ENCODE measurements at regions of chr3 and their contacts with region 1.

Region 1: GRCh38 chr3:153783106-153783505 is 338.1 kb upstream of the ARHGEF26 start:
- DNase-seq: no peak
- H3K4me3 ChIP-seq: no peak overlapping the region
- H3K27ac ChIP-seq: no peak overlapping the region
- H3K4me1 ChIP-seq: no peaks in the 10 kb centered on the region; a peak in 1 of 7 replicates
- H3K27me3 ChIP-seq: no peaks in the 10 kb centered on the region
- CTCF ChIP-seq: no peak
- EP300 ChIP-seq: no peak
- POLR2A ChIP-seq: no peak
- RAD21 ChIP-seq: no peak

Region 2: GRCh38 chr3:153768561-153769469 is 14.3 kb before region 1 on chr3:
- CTCF ChIA-PET with region 1: interaction called, 14 read pairs
- POLR2A ChIA-PET with region 1: no interaction called
- DNase-seq: peak; percentile 17 to 59
- H3K4me3 ChIP-seq: no peak overlapping the region
- H3K27ac ChIP-seq: no peak overlapping the region
- H3K4me1 ChIP-seq: no peaks in the 10 kb centered on the region
- H3K27me3 ChIP-seq: no peaks in the 10 kb centered on the region
- CTCF ChIP-seq: peak in 2 of 3 experiments; percentile 78 to 90; a peak in 3 of 4 replicates
- EP300 ChIP-seq: no peak
- POLR2A ChIP-seq: no peak
- RAD21 ChIP-seq: peak; percentile 93 to 96

Region 3: DNA sequence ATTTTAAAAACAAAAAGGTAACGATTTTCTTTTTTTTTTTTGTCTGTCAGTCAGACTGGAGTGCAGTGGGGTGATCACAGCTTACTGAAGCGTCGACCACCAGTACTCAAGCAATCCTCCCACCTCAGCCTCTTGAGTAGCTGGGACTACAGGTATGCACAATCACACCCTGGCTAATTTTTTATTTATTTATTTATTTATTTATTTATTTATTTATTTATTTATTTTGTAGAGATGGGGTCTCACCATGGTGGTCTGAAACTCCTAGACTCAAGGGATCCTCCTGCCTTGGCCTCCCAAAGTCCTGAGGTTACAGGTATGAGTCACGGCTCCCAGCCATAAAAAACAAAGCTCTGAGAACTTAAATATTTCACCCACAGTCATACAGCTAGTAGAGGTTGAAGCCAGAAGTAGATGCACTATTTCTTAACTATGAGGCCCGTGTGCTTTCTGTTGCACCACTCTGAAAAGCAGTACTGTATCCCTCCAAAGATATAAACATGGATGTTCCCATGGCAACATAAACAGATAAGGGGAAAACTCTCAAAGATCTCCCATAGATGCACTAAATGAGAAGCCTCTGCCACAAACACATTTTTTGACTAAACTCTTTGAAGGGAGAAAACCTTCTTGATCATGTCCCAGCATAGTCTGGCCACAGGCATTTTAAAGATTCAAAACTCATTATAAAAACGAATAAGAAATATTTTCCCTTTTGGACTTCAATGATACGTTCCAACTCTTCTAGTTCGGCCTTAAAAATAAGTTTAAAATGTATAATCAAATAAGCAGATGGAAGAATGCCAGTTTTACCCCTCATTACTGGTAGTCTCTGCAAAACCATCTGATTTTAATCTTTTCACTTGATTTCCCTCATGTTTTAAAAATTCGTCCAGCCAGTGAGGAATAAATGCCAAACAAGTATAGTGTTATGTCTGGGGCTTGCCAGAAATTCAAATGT is 175.8 kb after region 1 on chr3:
- CTCF ChIA-PET with region 1: no interaction called
- POLR2A ChIA-PET with region 1: no interaction called
- DNase-seq: no peak
- H3K4me3 ChIP-seq: no peak overlapping the region
- H3K27ac ChIP-seq: no peak overlapping the region
- H3K4me1 ChIP-seq: 0 out of 7 replicates have a peak, but pooled peaks cover 0 to 2% (median 0%) of the 10 kb centered on the region in 4 experiments
- H3K27me3 ChIP-seq: no peaks in the 10 kb centered on the region
- CTCF ChIP-seq: no peak
- EP300 ChIP-seq: no peak
- POLR2A ChIP-seq: no peak
- RAD21 ChIP-seq: no peak

Region 4: GRCh38 chr3:153970741-153971347 is 187.7 kb after region 1 on chr3:
- CTCF ChIA-PET with region 1: interaction called, 22 read pairs
- POLR2A ChIA-PET with region 1: no interaction called
- DNase-seq: no peak
- H3K4me3 ChIP-seq: no peak overlapping the region
- H3K27ac ChIP-seq: no peak overlapping the region
- H3K4me1 ChIP-seq: no peaks in the 10 kb centered on the region
- H3K27me3 ChIP-seq: no peaks in the 10 kb centered on the region
- CTCF ChIP-seq: peak in 2 of 3 experiments; percentile 28 to 49; a peak in 2 of 4 replicates
- EP300 ChIP-seq: no peak
- POLR2A ChIP-seq: no peak
- RAD21 ChIP-seq: peak; percentile 57 to 62

Measured in H1 (cell line).